Sciatic nerve (tissue), 2 donors: ENCODE measurements at regions of chr6 and their contacts with region 1.

Region 1: GRCh38 chr6:91781946-91782345 is 1195.1 kb upstream of the MAP3K7 start:
- DNase-seq: peak; percentile 58
- ATAC-seq: peak; percentile 79

Region 2: GRCh38 chr6:92507552-92507951 is 725.6 kb after region 1 on chr6:
- intact Hi-C with region 1: loop called (anchors 5 kb)
- DNase-seq: no peak
- ATAC-seq: peak; percentile 44